ENCODE measurements at regions of chr1 and their contacts with region 1.

Region 1: GRCh38 chr1:150561974-150562445 is 12.8 kb downstream of the ADAMTSL4 start:
- DNase-seq: peak; percentile 80 to 91
- H3K4me3 ChIP-seq: peak overlapping the region; percentile 42 to 79 (median 70)
- H3K27ac ChIP-seq: peak overlapping the region; percentile 88
- H3K4me1 ChIP-seq: peaks cover 16 to 27% (median 21%) of the 10 kb centered on the region in 4 experiments
- H3K27me3 ChIP-seq: no peaks in the 10 kb centered on the region
- CTCF ChIP-seq: no peak
- EP300 ChIP-seq: no peak
- POLR2A ChIP-seq: no peak; a peak in 1 of 3 replicates
- RAD21 ChIP-seq: no peak

Region 2: DNA sequence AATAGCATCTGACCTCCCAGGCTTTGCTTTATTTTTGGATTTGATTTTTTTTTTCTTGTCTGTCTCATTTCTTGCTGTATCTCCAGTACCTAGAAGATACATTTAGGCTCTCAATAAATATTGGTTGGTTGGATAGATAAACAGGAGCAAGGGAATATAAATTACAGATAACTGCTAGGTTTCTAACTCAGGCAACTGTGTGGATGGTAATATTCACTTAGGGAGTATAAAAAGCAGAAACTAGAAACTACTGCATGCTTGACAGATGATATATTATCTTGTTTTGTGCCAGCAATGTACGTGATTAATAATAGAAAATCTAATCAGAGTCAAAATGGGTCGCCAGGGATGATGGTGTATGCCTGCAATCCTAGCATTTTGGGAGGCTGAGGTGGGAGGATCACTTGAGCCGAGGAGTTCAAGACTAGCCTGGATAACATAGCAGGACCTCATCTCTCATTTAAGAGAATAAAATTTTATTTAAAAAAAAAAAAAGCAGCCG is 105.8 kb before region 1 on chr1:
- CTCF ChIA-PET with region 1: no interaction called
- POLR2A ChIA-PET with region 1: no interaction called
- DNase-seq: no peak
- H3K4me3 ChIP-seq: no peak overlapping the region
- H3K27ac ChIP-seq: no peak overlapping the region
- H3K4me1 ChIP-seq: no peaks in the 10 kb centered on the region
- H3K27me3 ChIP-seq: no peaks in the 10 kb centered on the region
- CTCF ChIP-seq: no peak
- EP300 ChIP-seq: no peak
- POLR2A ChIP-seq: no peak
- RAD21 ChIP-seq: no peak

Region 3: GRCh38 chr1:150537732-150538684 is 24.0 kb before region 1 on chr1:
- CTCF ChIA-PET with region 1: interaction called, 30 read pairs
- POLR2A ChIA-PET with region 1: interaction called, 4 read pairs
- DNase-seq: peak in 1 of 2 experiments; percentile 82
- H3K4me3 ChIP-seq: no peak overlapping the region
- H3K27ac ChIP-seq: no peak overlapping the region; the same call in 1 of the 2 replicates
- H3K4me1 ChIP-seq: peaks cover 0 to 8% (median 3%) of the 10 kb centered on the region in 4 experiments; a peak in 6 of 7 replicates
- H3K27me3 ChIP-seq: no peaks in the 10 kb centered on the region
- CTCF ChIP-seq: peak; percentile 43 to 62 (median 45)
- EP300 ChIP-seq: no peak
- POLR2A ChIP-seq: no peak
- RAD21 ChIP-seq: peak; percentile 26 to 40; a peak in 3 of 4 replicates

Region 4: DNA sequence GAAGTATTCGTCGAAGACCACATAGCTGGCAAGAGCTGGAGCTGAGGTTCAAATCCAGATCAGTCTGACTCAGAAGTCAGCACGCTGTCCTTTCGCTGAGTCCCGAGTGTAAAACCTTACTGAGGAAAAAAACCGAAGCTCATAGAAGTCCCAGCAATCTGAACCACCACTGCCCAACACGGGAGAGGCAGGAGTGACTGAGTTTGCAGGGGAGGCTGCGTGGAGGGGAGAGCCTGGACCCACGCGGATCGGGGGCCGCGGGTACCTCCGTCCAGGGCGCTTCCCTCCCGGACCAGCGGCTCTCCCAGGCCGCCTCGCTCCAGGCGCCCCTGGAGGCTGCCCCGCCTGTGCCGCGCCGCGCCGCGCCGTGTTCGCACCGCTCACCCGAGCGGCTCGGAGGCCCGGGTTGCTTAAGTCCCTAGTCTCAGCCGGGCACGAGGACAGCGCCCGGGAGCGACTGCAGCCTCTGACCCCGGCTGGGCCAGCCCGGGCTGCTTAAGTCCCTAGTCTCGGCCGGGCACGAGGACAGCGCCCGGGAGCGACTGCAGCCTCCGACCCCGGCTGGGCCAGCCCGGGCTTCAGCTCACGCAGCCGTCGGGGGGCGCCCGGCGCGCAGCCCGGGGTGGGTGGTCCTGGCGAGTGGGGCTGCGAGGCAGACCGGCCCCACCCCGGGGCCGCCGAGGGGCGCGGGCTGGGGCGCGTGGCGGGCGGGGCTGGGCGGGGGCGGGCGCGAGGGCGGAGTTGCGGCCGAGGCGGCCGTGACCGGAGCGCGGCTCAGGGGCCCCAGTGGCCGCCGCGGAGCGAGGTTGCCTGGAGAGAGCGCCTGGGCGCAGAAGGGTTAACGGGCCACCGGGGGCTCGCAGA is 13.1 kb before region 1 on chr1 and contains the start of gene ADAMTSL4:
- CTCF ChIA-PET with region 1: interaction called, 65 read pairs
- POLR2A ChIA-PET with region 1: interaction called, 1,013 read pairs
- DNase-seq: no peak
- H3K4me3 ChIP-seq: peak within 1 kb of the TSS; percentile 51 to 65 (median 53)
- H3K27ac ChIP-seq: no peak within 1 kb of the TSS
- H3K4me1 ChIP-seq: peaks cover 2 to 19% (median 11%) of the 10 kb centered on the region in 4 experiments
- H3K27me3 ChIP-seq: peaks cover 0 to 19% (median 10%) of the 10 kb centered on the region in 4 experiments; a peak in 5 of 7 replicates
- CTCF ChIP-seq: no peak
- EP300 ChIP-seq: no peak
- POLR2A ChIP-seq: no peak
- RAD21 ChIP-seq: no peak
- total RNA-seq, gene ADAMTSL4: 5.3 and 5.4 TPM in 2 replicates

Region 5: DNA sequence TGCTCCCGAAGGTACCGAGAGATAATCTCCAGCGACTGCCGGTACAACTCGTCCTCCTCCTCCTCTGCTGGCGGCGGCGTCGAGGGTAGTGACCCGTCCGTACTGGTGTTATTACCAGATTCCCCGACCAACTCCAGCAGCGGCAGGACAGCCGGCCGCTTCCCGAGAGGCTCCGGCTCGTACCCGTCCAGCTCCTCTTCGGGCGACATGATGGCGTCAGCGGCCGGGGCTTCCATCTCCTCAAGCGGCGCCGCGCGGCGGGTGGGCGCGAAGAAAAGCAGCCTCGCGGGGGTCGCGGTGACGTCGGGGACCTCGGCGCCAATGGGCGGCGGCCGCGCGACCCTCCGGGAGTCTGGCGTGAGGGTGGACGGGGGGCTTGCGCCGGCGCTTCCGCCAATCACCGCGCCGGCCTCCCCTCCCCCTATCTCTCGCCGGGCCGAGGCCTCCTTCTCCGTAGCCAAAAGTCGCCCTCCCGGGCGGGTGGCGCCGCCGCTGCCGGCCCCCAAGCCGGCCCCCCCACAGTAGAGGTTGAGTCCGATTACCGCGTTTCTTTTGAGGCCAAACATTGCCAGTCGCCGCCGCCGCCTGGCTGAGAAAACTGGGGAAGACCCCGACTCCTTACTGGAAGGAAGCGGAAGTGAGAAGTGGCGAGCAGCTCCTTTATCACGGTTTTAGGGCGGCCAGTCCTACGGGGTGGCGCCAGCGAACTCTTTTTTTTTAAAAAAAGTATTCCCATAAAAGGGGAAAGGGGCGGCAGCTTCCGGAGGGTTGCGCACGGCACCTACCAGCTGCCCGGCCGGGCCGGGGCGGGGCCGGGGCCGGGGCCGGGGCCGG is 17.2 kb after region 1 on chr1 and contains the start of gene MCL1:
- CTCF ChIA-PET with region 1: interaction called, 29 read pairs
- POLR2A ChIA-PET with region 1: interaction called, 1,013 read pairs
- DNase-seq: peak; percentile 82 to 90
- H3K4me3 ChIP-seq: peak within 1 kb of the TSS; percentile 100
- H3K27ac ChIP-seq: peak within 1 kb of the TSS; percentile 98
- H3K4me1 ChIP-seq: peaks cover 5 to 15% (median 13%) of the 10 kb centered on the region in 4 experiments
- H3K27me3 ChIP-seq: no peaks in the 10 kb centered on the region
- CTCF ChIP-seq: no peak
- EP300 ChIP-seq: 0 out of 3 replicates have a peak, but pooled peaks of 1 of the 2 experiments have one; percentile 2
- POLR2A ChIP-seq: peak; percentile 89 to 97
- RAD21 ChIP-seq: peak in 1 of 2 experiments; percentile 15; a peak in 1 of 4 replicates
- total RNA-seq, gene MCL1: 196 and 218 TPM in 2 replicates

Region 6: DNA sequence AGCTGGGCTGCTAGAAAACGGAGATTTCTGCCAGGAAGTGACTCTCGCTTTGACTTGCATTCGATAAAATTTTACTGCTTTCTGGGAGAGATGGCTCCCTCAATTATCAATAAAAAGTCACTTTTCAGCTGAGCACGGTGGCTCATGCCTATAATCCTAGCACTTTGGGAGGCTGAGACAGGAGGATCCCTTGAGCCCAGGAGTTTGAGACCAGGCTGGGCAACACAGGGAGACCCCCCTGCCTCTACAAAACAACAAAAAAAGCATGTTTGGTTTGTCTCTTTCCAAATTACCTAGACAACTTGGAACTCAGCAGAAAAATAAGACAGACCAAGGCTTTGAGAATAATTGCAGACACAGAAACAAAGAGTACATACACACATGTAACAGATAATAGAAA is 80.3 kb after region 1 on chr1:
- CTCF ChIA-PET with region 1: interaction called, 4 read pairs
- POLR2A ChIA-PET with region 1: interaction called, 13 read pairs
- DNase-seq: no peak
- H3K4me3 ChIP-seq: peak overlapping the region in 1 of 4 experiments; percentile 14; a peak in 1 of 8 replicates
- H3K27ac ChIP-seq: peak overlapping the region; percentile 71; the same call in 1 of the 2 replicates
- H3K4me1 ChIP-seq: peaks cover 1 to 8% (median 4%) of the 10 kb centered on the region in 4 experiments; a peak in 3 of 7 replicates
- H3K27me3 ChIP-seq: no peaks in the 10 kb centered on the region
- CTCF ChIP-seq: no peak
- EP300 ChIP-seq: no peak
- POLR2A ChIP-seq: no peak
- RAD21 ChIP-seq: no peak

Measured in H1 (cell line).